ENCODE measurements at regions of chr11 and their contacts with region 1.

Region 1: DNA sequence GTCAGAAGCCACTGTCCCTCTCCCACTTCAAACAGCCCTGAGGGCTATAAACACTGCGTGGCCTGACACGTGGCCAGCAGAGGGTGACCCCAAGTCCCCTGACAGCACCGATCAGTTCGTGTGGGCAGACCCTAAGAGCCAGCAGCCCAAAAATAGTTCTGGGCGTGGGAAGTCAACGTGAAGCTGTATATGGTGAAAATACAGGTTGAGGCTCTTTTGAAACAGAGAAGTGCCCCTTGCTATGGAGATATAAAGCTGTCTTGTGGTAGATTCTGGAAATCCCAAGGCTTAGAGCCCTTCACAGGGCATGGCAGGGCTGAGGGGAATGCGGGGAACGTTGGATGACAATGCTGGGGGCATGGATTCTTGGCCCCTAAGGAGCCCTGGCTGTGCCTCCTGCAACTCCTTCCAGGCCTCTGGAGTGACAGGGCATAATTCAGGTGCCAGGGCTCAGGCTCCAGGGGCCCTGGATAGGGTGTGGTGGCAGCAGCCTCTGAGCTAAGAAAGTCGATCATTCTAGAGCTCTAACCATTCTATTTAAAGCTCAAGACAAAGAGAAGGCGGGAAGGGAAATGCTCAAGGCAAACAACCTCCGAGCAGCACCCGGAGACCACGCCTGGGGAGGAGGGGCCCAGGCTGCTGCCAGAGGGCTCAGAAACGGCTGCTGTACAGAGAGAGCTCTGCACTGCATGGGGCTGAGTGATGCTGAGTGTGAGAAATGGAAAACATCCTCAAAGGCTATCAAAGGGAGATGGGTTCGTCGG is 60.4 kb upstream of the CD5 start:
- DNase-seq: peak; percentile 94
- ATAC-seq: peak; percentile 100
- H3K4me3 Mint-ChIP-seq: peak overlapping the region; percentile 64
- H3K27ac Mint-ChIP-seq: peak overlapping the region; percentile 94
- H3K4me1 Mint-ChIP-seq: peaks cover 58% of the 10 kb centered on the region
- H3K27me3 Mint-ChIP-seq: no peaks in the 10 kb centered on the region

Region 2: DNA sequence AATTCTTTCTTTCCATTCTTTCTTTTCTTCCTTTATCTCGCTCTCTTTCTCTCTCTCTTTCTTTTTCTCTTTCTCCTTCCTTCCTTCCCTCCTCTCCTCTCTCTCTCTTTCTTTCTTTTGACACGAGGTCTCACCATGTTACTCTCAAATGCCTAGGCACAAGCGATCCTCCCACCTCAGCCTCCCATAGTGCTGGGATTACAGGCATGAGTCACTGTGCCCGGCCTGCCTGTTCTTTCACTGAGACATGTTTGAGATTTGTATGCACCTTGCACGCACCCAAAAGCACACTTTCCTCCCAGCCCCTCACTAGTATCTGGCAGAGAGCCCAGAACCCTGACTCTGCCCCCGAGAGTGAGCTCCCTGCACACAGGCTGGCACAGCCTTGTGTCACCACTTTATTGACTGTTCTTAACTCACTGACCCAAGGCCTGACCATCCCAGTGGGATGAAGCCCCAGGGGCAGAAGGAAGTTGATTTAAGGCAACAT is 13.6 kb before region 1 on chr11:
- CTCF ChIA-PET with region 1: interaction called, 4 read pairs
- POLR2A ChIA-PET with region 1: interaction called, 67 read pairs
- DNase-seq: peak; percentile 66
- ATAC-seq: peak; percentile 32
- H3K4me3 Mint-ChIP-seq: peak overlapping the region; percentile 76
- H3K27ac Mint-ChIP-seq: peak overlapping the region; percentile 96
- H3K4me1 Mint-ChIP-seq: peaks cover 72% of the 10 kb centered on the region
- H3K27me3 Mint-ChIP-seq: no peaks in the 10 kb centered on the region

Region 3: GRCh38 chr11:61061081-61061826 is 19.3 kb after region 1 on chr11:
- CTCF ChIA-PET with region 1: interaction called, 13 read pairs
- POLR2A ChIA-PET with region 1: interaction called, 23 read pairs
- DNase-seq: peak; percentile 82
- ATAC-seq: peak; percentile 83
- H3K4me3 Mint-ChIP-seq: peak overlapping the region; percentile 71
- H3K27ac Mint-ChIP-seq: peak overlapping the region; percentile 93
- H3K4me1 Mint-ChIP-seq: peaks cover 70% of the 10 kb centered on the region
- H3K27me3 Mint-ChIP-seq: no peaks in the 10 kb centered on the region

Region 4: DNA sequence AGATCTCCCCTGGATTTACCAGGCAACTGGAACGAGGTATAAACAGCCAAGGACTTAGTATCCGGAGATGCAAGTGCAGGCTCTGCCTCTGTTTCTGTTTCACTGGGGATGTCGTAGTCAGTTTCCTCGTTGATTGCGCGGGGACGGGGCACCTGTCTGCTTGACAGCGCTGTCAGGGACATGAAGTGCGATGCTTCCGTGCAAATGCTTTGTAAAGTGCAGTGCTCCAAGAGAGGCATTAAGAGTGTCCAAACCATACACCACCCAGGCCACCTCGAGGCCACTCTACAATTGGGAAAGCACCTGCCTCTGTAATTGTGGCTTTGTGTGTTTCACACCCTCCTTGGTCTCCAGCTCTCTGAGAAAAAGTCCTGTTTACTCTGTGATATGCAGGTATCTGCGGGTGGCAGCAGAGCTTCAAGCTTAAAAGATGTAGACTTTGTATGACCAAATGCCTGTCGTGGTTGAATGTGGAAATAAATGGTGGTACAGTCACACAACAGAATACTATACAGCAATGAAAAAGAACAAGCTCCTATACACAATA is 41.7 kb after region 1 on chr11:
- CTCF ChIA-PET with region 1: interaction called, 11 read pairs
- POLR2A ChIA-PET with region 1: interaction called, 31 read pairs
- DNase-seq: peak; percentile 78
- ATAC-seq: peak; percentile 60
- H3K4me3 Mint-ChIP-seq: peak overlapping the region; percentile 71
- H3K27ac Mint-ChIP-seq: peak overlapping the region; percentile 96
- H3K4me1 Mint-ChIP-seq: peaks cover 53% of the 10 kb centered on the region
- H3K27me3 Mint-ChIP-seq: no peaks in the 10 kb centered on the region

Region 5: GRCh38 chr11:61361686-61362541 is 320.0 kb after region 1 on chr11 and contains the starts of genes CYB561A3 and TMEM138:
- CTCF ChIA-PET with region 1: no interaction called
- POLR2A ChIA-PET with region 1: no interaction called
- DNase-seq: peak; percentile 95
- ATAC-seq: peak; percentile 97
- H3K4me3 Mint-ChIP-seq: peak within 1 kb of the TSS; percentile 95
- H3K27ac Mint-ChIP-seq: peak within 1 kb of the TSS; percentile 94
- H3K4me1 Mint-ChIP-seq: peaks cover 37% of the 10 kb centered on the region
- H3K27me3 Mint-ChIP-seq: no peaks in the 10 kb centered on the region
- total RNA-seq, gene CYB561A3: 53.2 to 55.6 TPM
- total RNA-seq, gene TMEM138: 57.4 to 57.5 TPM